Dendritic cell treated with granulocyte-macrophage colony-stimulating factor and Interleukin-4, amounts not matched to agents 40 ng/mL and 50 ng/mL, for 4 days (primary cell): ENCODE measurements at regions of chr16 and their contacts with region 1.

Region 1: GRCh38 chr16:15765880-15766279 is 90.9 kb downstream of the MYH11 start:
- H3K4me3 Mint-ChIP-seq: no peak overlapping the region
- H3K27ac Mint-ChIP-seq: no peak overlapping the region
- H3K4me1 Mint-ChIP-seq: no peaks in the 10 kb centered on the region
- H3K27me3 Mint-ChIP-seq: no peaks in the 10 kb centered on the region

Region 2: DNA sequence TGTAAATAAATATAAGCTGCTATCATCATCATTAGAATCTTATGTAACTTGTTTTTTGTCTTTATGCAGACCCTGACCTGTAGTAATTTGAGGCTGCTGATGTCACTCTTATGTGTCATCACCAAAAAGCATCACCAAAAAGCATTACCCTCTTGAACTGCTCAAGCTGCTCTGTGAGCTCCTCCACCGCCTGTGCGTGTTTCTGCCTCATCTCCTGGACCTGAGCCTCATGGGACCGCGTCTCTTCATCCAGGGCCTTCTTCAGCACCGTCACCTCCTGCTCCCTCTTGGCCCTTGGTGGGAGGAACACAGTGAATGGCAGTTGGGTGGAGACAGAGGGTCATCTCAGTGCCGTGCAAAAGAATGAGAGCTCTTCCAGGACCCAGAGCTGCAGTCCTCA is 33.5 kb before region 1 on chr16:
- intact Hi-C with region 1: no loop called
- H3K4me3 Mint-ChIP-seq: no peak overlapping the region
- H3K27ac Mint-ChIP-seq: no peak overlapping the region
- H3K4me1 Mint-ChIP-seq: no peaks in the 10 kb centered on the region
- H3K27me3 Mint-ChIP-seq: no peaks in the 10 kb centered on the region

Region 3: GRCh38 chr16:15865742-15866141 is 99.9 kb after region 1 on chr16:
- intact Hi-C with region 1: no loop called
- H3K4me3 Mint-ChIP-seq: no peak overlapping the region
- H3K27ac Mint-ChIP-seq: no peak overlapping the region
- H3K4me1 Mint-ChIP-seq: no peaks in the 10 kb centered on the region
- H3K27me3 Mint-ChIP-seq: no peaks in the 10 kb centered on the region

Region 4: DNA sequence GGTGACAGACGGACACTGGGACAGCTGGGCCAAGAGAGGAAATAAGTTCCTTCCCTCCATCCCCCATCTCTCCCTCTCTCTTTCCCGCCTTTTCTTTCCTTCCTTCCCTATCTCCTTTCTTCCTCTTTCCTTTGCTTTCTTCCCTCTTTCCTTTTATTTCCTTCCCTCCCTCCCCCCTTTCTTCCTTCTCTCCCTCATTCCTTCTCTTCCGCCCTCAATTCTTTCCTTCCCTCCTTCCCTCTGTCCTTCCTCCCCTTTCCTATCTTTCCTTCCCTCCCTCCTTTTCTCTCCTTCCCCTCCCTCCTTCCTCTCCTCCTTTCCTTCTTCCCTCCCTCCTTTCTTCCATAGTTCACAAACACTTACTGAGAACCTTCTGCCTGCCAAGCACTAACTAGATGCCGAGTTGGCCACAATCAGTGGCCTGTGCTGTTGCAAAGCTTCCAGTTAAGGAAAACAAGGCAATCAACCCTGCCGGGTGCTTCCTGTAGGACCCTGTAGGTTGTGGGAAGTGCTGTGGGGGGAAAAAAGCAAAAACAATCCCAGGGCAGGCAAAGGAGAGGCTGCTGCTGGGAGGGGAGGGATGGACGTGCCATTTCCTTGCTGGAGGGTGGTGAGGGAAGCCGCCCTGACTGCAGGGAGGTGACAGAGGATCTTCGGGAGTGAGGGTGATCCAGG is 425.8 kb after region 1 on chr16:
- intact Hi-C with region 1: loop called (anchors 5 kb)
- H3K4me3 Mint-ChIP-seq: no peak overlapping the region
- H3K27ac Mint-ChIP-seq: no peak overlapping the region
- H3K4me1 Mint-ChIP-seq: peaks cover 6% of the 10 kb centered on the region
- H3K27me3 Mint-ChIP-seq: no peaks in the 10 kb centered on the region